Thyroid gland (tissue), 4 donors: ENCODE measurements at regions of chr4 and their contacts with region 1.

Region 1: GRCh38 chr4:70687821-70688794 is at the start of gene UTP3:
- DNase-seq: peak; percentile 95 to 97
- H3K4me3 ChIP-seq: peak within 1 kb of the TSS; percentile 77 to 98 (median 88)
- H3K27ac ChIP-seq: peak within 1 kb of the TSS; percentile 90 to 98 (median 95)
- H3K4me1 ChIP-seq: peaks cover 26 to 30% of the 10 kb centered on the region in 2 donors
- H3K27me3 ChIP-seq: no peaks in the 10 kb centered on the region
- CTCF ChIP-seq: peak; percentile 86 to 98 (median 93)
- POLR2A ChIP-seq: peak in 1 of 2 donors; percentile 74
- total RNA-seq, gene UTP3: 12.4 to 17.7 (median 15.5) TPM

Region 2: GRCh38 chr4:70993181-70994068 is 305.3 kb after region 1 on chr4 and contains the start of gene DCK:
- intact Hi-C with region 1: loop called (anchors 10 kb)
- DNase-seq: peak; percentile 90
- H3K4me3 ChIP-seq: peak within 1 kb of the TSS; percentile 59 to 86 (median 76)
- H3K27ac ChIP-seq: peak within 1 kb of the TSS; percentile 80 to 91 (median 82)
- H3K4me1 ChIP-seq: peaks cover 7 to 13% of the 10 kb centered on the region in 2 donors
- H3K27me3 ChIP-seq: no peaks in the 10 kb centered on the region
- CTCF ChIP-seq: peak in 1 of 6 experiments; percentile 7
- POLR2A ChIP-seq: peak in 1 of 2 donors; percentile 86
- total RNA-seq, gene DCK: 10.9 to 15.2 (median 14.6) TPM